ENCODE measurements at regions of chr17 and their contacts with region 1.

Region 1: GRCh38 chr17:4565209-4566141 is 5.1 kb upstream of the GGT6 start:
- DNase-seq: peak; percentile 83 to 85
- H3K4me3 ChIP-seq: no peak overlapping the region
- H3K4me1 ChIP-seq: peaks cover 11% of the 10 kb centered on the region
- H3K27me3 ChIP-seq: 0 out of 2 replicates have a peak, but pooled peaks cover 5% of the 10 kb centered on the region

Region 2: DNA sequence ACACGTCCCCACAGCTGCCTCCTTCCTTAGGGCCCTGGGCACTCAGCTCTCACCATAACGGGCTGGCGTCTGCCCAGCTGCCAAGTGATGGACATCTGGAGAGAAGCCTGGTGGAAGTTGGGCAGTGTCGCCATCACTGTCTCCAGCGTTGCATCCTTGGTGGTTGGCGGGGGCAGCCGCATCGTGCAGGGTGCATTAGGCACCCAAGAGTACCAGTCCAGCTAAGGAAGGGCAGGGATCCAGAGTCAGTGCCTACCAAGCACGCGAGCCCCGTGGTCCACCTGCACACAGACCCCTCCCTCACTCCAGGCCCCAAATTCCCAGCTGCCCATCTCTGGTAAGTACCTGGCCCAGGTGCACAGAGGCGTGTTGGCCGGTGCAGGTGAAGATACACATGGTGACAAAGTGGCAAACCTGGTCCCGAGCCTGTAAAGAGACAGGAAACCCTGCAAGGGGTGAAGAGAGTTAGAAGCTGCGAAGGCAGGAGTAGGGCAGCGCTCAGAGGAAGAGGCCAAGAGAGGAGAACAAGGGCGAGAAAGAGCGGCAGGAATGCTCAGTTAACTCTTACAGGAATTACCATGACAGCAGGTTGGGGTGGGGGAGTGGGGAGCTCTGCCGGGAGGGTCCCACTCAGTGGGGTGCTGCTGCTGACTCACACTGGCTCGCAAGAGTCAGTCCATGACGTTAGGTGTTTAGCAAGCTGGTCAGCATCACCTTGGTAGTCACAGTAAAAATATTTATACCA is 66.5 kb after region 1 on chr17:
- in situ Hi-C with region 1: loop called (anchors 5 kb)
- DNase-seq: no peak
- H3K4me3 ChIP-seq: no peak overlapping the region
- H3K4me1 ChIP-seq: peaks cover 6% of the 10 kb centered on the region
- H3K27me3 ChIP-seq: peaks cover 10% of the 10 kb centered on the region; the same call in 1 of the 2 replicates

Region 3: DNA sequence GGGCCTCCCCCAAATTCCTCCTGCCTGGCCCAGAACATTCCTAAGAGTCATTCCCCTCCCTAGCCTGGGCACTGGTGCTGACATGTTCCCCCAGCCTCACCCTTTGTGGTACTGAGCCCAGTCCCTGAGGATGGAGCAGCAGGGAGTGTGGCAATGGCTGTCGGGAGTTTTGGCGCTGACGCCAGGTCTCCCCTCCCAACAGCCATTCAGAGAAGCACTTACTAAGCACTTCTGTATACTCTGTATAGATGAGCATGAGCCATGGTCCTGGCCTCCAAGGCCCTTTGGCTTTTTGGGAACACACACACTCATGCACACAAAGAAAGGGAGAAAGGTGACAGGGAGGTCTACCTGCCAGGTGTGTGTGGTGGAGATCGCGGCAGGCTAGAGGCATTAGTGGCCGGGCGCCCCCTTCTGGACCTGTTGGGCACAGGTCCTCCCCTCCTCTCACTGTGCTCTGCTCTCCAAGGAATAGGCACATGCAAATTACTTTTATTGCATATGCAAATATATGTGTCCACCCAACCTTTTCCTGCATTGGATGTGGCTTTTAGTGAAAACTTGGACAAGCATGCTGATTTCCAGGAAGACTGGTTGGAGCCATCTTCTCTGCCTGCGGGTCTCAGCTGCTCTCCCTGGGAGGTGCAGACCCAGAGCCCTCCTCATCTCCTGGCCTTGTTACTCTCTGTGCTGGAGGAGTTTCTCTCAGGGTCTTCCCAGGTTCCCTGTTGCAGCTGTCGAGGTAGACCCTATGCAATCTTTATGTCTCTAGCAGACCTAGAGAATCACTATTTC is 316.5 kb after region 1 on chr17:
- in situ Hi-C with region 1: loop called (anchors 10 kb)
- DNase-seq: peak; percentile 52 to 81
- H3K4me3 ChIP-seq: no peak overlapping the region
- H3K4me1 ChIP-seq: no peaks in the 10 kb centered on the region
- H3K27me3 ChIP-seq: no peaks in the 10 kb centered on the region

Measured in HAP-1 (cell line).